Common myeloid progenitor, CD34-positive (primary cell): ENCODE measurements at regions of chr19 and their contacts with region 1.

Region 1: DNA sequence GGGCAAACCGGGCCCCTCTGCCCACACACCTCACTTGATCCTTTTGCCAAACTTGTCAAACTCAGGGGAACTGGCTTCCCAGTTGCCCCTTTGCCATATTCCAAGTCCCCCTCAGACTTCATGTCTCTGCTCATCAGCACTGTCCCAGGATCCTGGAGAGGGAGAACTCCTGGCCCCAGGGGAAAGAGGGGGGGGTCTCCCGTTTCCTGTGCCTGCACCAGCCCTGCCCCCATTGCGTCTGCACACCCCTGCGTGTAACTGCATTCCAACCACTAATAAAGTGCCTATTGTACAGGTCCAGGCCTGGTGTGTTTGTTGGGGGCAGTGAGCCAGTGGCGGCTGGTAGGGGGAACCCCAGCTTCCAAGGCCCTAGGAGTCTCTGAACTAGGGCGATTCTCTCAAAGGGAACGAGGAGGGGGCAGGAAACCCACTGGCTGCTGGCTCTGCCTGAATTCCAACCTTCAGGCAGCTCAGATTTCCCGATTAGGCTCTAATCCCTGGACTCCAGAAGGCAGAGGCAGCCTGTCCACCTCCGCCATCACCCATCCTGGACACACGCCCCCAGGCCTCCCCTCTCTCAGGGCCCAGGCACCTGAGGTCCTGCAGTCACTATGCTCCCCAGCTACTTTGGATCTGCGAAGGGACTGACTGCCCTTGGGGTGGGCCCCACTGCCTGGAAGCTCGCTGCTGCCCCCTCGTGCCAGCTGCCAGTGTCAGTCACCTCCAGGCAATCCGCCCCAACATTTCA is 9.7 kb upstream of the ILF3 start:
- DNase-seq: peak; percentile 76 to 88 (median 87)
- H3K4me3 ChIP-seq: peak overlapping the region in 1 of 7 experiments; percentile 28
- H3K27ac ChIP-seq: no peak overlapping the region
- H3K4me1 ChIP-seq: peaks cover 5 to 29% (median 23%) of the 10 kb centered on the region in 4 experiments
- H3K27me3 ChIP-seq: no peaks in the 10 kb centered on the region

Region 2: GRCh38 chr19:10478903-10479384 is 165.5 kb before region 1 on chr19:
- CTCF ChIA-PET with region 1: interaction called, 11 read pairs
- POLR2A ChIA-PET with region 1: interaction called, 3 read pairs
- DNase-seq: peak; percentile 93 to 98 (median 96)
- H3K4me3 ChIP-seq: peak overlapping the region in 3 of 7 experiments; percentile 30 to 58 (median 43)
- H3K27ac ChIP-seq: no peak overlapping the region
- H3K4me1 ChIP-seq: peaks cover 2 to 19% (median 12%) of the 10 kb centered on the region in 4 experiments
- H3K27me3 ChIP-seq: no peaks in the 10 kb centered on the region

Region 3: GRCh38 chr19:10593820-10594637 is 50.4 kb before region 1 on chr19:
- CTCF ChIA-PET with region 1: interaction called, 12 read pairs
- POLR2A ChIA-PET with region 1: no interaction called
- DNase-seq: no peak
- H3K4me3 ChIP-seq: no peak overlapping the region
- H3K27ac ChIP-seq: no peak overlapping the region
- H3K4me1 ChIP-seq: peaks cover 9 to 39% (median 25%) of the 10 kb centered on the region in 4 experiments
- H3K27me3 ChIP-seq: no peaks in the 10 kb centered on the region

Region 4: DNA sequence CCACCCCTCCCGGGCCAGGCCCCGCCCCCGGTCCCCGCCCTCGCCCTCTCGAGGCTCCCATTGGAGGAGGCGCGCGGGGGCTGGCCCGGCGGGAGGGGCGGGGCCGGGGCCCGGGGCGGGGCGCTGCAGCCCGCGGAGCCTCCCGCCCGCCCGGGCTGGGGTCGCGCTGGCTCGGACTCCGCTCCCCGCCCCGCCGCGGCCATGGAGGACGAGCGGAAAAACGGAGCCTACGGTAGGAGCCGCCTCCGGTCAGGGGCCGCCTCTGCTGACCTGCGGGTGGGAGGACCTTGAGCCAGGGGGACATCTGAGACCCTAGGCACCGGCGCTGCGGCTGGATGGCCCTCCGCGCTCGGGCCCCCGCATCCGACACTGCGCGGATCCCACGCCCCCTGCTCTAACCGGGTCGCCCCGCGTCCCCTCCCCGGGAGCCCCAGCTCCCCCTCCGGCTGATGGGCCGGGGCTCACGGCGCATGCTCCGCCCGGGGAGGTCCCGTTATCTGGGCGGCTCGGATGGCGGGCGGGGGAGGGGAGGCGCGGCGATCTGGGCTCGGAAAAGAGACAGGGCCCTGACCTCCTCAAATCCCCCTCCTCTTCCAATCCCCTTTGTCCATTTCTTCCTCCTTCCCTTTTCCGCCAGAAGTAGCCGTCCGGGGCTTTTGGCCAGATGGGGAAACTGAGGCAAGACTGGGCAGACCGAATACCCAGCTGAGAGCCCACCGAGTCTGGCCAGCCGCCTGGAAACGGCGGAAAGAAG is 41.9 kb before region 1 on chr19:
- CTCF ChIA-PET with region 1: interaction called, 12 read pairs
- POLR2A ChIA-PET with region 1: interaction called, 11 read pairs
- DNase-seq: peak; percentile 65 to 80 (median 75)
- H3K4me3 ChIP-seq: peak overlapping the region; percentile 85 to 95 (median 91)
- H3K27ac ChIP-seq: peak overlapping the region; percentile 52 to 86
- H3K4me1 ChIP-seq: peaks cover 10 to 42% (median 32%) of the 10 kb centered on the region in 4 experiments
- H3K27me3 ChIP-seq: no peaks in the 10 kb centered on the region

Region 5: DNA sequence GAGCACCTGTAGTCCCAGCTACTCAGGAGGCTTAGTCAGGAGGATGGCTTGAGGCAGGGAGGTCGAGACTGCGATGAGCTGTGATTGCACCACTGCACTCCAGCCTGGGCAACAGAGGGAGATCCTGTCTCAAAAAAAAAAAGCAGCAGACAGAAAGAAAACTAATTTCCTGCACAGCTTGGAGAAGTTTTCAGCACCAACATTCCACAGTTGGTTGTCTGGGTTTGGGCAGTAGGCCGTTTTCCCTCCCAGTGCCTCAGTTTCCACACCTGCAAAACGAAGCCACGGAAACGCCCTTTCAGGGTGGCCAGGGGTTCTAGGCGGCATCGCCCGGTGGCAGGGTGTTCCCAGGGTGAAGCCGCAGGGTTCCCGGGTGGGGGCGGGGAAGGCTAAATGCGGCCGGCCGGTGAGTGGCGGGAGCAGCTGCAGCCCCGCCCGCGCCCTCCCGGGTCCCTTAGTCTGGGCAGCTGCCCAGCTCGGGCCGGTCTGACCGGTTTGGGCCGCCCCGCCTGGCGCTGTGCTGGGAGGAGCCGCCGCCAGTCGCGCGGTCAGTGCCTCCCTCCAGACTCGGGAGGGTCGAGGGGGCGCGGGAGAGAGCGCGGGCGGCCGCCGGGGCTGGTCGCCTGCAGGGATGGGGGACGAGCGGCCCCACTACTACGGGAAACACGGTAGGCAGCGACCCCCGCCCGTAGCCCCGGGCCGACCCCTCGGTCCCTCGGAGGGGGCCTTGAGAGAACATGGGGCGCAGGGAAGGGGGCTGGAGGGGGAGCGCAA is 19.2 kb before region 1 on chr19 and contains the start of gene SLC44A2:
- CTCF ChIA-PET with region 1: interaction called, 14 read pairs
- POLR2A ChIA-PET with region 1: no interaction called
- DNase-seq: no peak
- H3K4me3 ChIP-seq: no peak within 1 kb of the TSS
- H3K27ac ChIP-seq: no peak within 1 kb of the TSS
- H3K4me1 ChIP-seq: no peaks in the 10 kb centered on the region
- H3K27me3 ChIP-seq: no peaks in the 10 kb centered on the region

Region 6: DNA sequence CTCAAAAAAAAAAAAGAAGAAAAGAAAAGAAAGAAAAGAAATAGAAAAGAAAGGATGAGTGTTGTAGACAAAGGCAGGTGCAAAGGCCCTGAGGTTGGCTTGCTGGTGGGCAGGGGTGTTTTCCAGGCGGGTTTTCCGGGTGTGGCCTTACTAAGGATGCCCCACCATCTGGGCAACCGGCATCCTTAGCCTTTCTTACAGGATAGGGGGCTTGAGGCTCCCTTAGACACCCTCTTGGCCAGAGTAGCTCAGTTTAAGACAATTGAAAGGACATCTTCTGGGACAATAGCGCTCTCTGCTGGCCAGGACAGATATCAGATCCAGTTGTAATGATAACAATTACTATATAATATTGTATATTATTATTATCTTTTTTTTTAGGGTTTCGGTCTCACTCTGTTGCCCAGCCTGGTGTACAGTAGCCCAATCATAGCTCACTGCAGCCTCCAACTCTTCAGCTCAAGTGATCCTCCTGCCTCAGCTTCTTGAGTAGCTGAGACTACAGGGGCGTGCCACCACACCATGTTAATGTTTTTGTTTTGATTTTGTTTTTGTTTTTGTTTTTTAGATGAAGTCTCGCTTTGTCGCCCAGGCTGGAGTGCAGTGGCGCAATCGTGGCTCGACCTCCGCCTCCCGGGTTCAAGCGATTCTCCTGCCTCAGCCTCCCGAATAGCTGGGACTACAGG is 55.4 kb after region 1 on chr19:
- CTCF ChIA-PET with region 1: interaction called, 17 read pairs
- POLR2A ChIA-PET with region 1: no interaction called
- DNase-seq: peak; percentile 71 to 87 (median 83)
- H3K4me3 ChIP-seq: no peak overlapping the region
- H3K27ac ChIP-seq: no peak overlapping the region
- H3K4me1 ChIP-seq: peaks cover 0 to 27% (median 22%) of the 10 kb centered on the region in 4 experiments
- H3K27me3 ChIP-seq: peaks cover 0 to 6% (median 0%) of the 10 kb centered on the region in 5 experiments